PC-3 (cell line): ENCODE measurements at regions of chr11 and their contacts with region 1.

Region 1: DNA sequence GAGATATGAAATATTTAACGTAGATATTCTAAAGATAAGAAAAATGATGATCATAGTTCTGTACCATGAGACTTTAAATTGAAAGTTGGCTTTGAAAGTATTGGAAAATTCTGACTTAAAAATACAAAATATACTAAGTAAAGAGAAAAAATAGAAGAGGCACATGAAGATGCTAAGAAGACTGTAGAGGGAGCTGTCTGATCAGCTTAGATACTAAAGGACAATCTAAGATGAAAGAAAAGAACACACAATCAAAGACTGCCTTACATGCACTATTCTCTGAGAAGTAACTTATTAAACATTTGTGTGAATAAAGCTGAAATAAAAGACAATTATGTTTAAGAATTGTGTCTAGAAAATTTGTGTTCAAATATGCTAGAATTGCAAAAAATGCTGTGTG is 55.1 kb downstream of the RBMXL2 start:
- DNase-seq: peak; percentile 56
- ATAC-seq: peak; percentile 74
- H3K4me3 ChIP-seq: no peak overlapping the region
- H3K27ac ChIP-seq: no peak overlapping the region
- H3K4me1 ChIP-seq: no peaks in the 10 kb centered on the region
- H3K27me3 ChIP-seq: peaks cover 22% of the 10 kb centered on the region
- CTCF ChIP-seq: peak; percentile 72

Region 2: DNA sequence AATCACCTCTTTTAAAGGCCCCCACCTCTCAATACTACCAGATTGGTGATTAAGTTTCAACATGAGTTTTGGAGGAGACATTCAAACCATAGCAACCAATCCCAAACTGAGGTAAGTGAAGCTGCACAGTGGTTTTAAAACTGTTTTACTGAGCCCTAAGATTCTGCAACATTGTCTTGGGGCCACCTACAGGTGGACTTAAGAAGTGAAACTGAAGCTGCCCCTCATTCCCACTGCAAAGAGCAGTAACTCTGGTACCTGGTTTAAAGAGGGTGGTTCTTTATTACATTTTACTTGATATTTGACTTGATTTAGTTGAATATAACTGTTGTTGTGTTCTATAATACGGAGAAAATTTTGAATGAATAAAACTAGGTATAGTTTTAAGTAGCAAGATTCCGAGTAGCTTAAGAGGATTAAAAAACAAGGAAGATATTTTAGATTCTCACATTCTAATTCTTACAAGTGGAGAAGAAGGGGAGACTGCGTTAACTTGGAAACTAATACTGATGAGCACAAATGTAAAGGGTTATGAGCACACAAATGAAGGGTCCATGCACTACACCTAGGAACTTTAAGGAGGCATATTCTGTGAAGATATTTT is 134.5 kb after region 1 on chr11:
- CTCF ChIA-PET with region 1: interaction called, 8 read pairs
- POLR2A ChIA-PET with region 1: no interaction called
- intact Hi-C with region 1: loop called (anchors 1 kb)
- DNase-seq: peak; percentile 69
- ATAC-seq: peak; percentile 68
- H3K4me3 ChIP-seq: no peak overlapping the region
- H3K27ac ChIP-seq: no peak overlapping the region
- H3K4me1 ChIP-seq: peaks cover 21% of the 10 kb centered on the region
- H3K27me3 ChIP-seq: no peaks in the 10 kb centered on the region
- CTCF ChIP-seq: peak; percentile 84

Region 3: GRCh38 chr11:7353100-7353499 is 209.2 kb after region 1 on chr11:
- CTCF ChIA-PET with region 1: interaction called, 3 read pairs
- POLR2A ChIA-PET with region 1: no interaction called
- intact Hi-C with region 1: loop called (anchors 5 kb)
- DNase-seq: peak; percentile 55
- ATAC-seq: peak; percentile 60
- H3K4me3 ChIP-seq: no peak overlapping the region
- H3K27ac ChIP-seq: no peak overlapping the region
- H3K4me1 ChIP-seq: peaks cover 8% of the 10 kb centered on the region
- H3K27me3 ChIP-seq: no peaks in the 10 kb centered on the region
- CTCF ChIP-seq: peak; percentile 70